T-cell (primary cell): ENCODE measurements at regions of chr17 and their contacts with region 1.

Region 1: DNA sequence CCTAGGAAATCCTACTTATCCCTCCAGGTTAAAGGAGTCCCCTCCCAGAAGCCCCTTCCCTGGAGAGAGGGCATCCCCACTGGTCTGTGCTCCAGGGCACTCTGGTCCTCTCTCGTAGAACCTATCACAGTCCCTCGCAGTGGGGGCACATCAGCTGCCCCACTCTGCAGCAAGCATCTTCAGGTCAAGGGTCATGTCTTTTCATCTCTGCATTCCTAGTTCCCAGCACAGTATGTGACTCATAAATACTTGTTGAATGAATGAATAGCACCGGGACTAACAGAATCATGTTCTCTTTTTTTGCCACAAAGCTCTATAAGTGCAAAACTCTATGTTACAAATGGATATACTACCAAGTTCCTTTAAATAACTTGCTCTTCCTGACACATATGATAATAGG is 36.0 kb downstream of the RNF157 start:
- DNase-seq: no peak
- ATAC-seq: no peak
- H3K4me3 ChIP-seq: no peak overlapping the region
- H3K4me3 Mint-ChIP-seq: no peak overlapping the region
- H3K27ac ChIP-seq: no peak overlapping the region
- H3K27ac Mint-ChIP-seq: peak overlapping the region; percentile 25 to 84
- H3K4me1 ChIP-seq: peaks cover 18 to 53% of the 10 kb centered on the region in 2 experiments
- H3K4me1 Mint-ChIP-seq: peaks cover 67 to 75% (median 72%) of the 10 kb centered on the region in 3 donors
- H3K27me3 ChIP-seq: no peaks in the 10 kb centered on the region
- H3K27me3 Mint-ChIP-seq: no peaks in the 10 kb centered on the region

Region 2: GRCh38 chr17:76049836-76050537 is 154.3 kb before region 1 on chr17:
- CTCF ChIA-PET with region 1: no interaction called
- POLR2A ChIA-PET with region 1: interaction called in 1 of 2 experiments, 12 read pairs
- DNase-seq: no peak
- ATAC-seq: no peak
- H3K4me3 ChIP-seq: no peak overlapping the region
- H3K4me3 Mint-ChIP-seq: no peak overlapping the region
- H3K27ac ChIP-seq: no peak overlapping the region
- H3K27ac Mint-ChIP-seq: peak overlapping the region in 1 of 2 donors; percentile 49
- H3K4me1 ChIP-seq: peaks cover 0 to 2% of the 10 kb centered on the region in 2 experiments
- H3K4me1 Mint-ChIP-seq: peaks cover 11 to 25% (median 23%) of the 10 kb centered on the region in 3 donors
- H3K27me3 ChIP-seq: no peaks in the 10 kb centered on the region
- H3K27me3 Mint-ChIP-seq: no peaks in the 10 kb centered on the region

Region 3: GRCh38 chr17:76182016-76182764 is 22.1 kb before region 1 on chr17:
- CTCF ChIA-PET with region 1: interaction called in 1 of 2 experiments, 11 read pairs
- POLR2A ChIA-PET with region 1: interaction called, 5 to 6 read pairs
- DNase-seq: peak; percentile 84 to 97 (median 91)
- ATAC-seq: peak; percentile 58 to 65 (median 60)
- H3K4me3 ChIP-seq: no peak overlapping the region
- H3K4me3 Mint-ChIP-seq: peak overlapping the region in 1 of 3 donors; percentile 45
- H3K27ac ChIP-seq: peak overlapping the region; percentile 49
- H3K27ac Mint-ChIP-seq: peak overlapping the region; percentile 93 to 94
- H3K4me1 ChIP-seq: peaks cover 39 to 62% of the 10 kb centered on the region in 2 experiments
- H3K4me1 Mint-ChIP-seq: peaks cover 52 to 69% (median 67%) of the 10 kb centered on the region in 3 donors
- H3K27me3 ChIP-seq: no peaks in the 10 kb centered on the region
- H3K27me3 Mint-ChIP-seq: no peaks in the 10 kb centered on the region

Region 4: DNA sequence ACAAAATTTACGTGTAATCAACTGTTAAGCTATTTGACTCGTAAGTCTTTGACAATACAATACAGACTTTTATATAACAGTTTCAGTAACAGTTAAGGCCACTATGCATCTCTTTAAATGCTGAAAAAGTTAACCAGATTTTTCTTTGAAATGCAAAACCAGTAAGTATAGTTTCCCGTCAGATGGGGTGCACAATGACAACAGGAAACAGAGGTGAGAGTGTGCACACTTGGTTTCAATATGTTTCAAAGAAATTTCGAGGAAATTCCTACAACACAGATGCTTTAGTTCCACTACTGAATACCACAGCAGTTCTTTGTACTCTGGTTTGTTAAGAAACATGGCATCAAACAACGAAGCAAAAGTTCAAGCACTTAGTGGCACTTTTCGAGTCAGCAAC is 12.4 kb before region 1 on chr17:
- CTCF ChIA-PET with region 1: interaction called in 1 of 2 experiments, 6 read pairs
- POLR2A ChIA-PET with region 1: interaction called, 4 to 12 read pairs
- DNase-seq: peak in 29 of 35 experiments; percentile 13 to 85 (median 50)
- ATAC-seq: peak; percentile 85 to 89 (median 88)
- H3K4me3 ChIP-seq: peak overlapping the region in 1 of 2 donors; percentile 15
- H3K4me3 Mint-ChIP-seq: peak overlapping the region; percentile 43 to 64 (median 60)
- H3K27ac ChIP-seq: peak overlapping the region; percentile 90
- H3K27ac Mint-ChIP-seq: peak overlapping the region; percentile 77 to 95
- H3K4me1 ChIP-seq: peaks cover 67 to 76% of the 10 kb centered on the region in 2 experiments
- H3K4me1 Mint-ChIP-seq: peaks cover 80 to 91% (median 84%) of the 10 kb centered on the region in 3 donors
- H3K27me3 ChIP-seq: no peaks in the 10 kb centered on the region
- H3K27me3 Mint-ChIP-seq: no peaks in the 10 kb centered on the region

Region 5: GRCh38 chr17:76268015-76268749 is 63.9 kb after region 1 on chr17:
- CTCF ChIA-PET with region 1: interaction called in 1 of 2 experiments, 13 read pairs
- POLR2A ChIA-PET with region 1: interaction called, 4 read pairs
- DNase-seq: peak in 34 of 35 experiments; percentile 57 to 81 (median 67)
- ATAC-seq: peak in 1 of 4 experiments; percentile 5
- H3K4me3 ChIP-seq: peak overlapping the region; percentile 74 to 77
- H3K4me3 Mint-ChIP-seq: peak overlapping the region; percentile 85 to 91 (median 89)
- H3K27ac ChIP-seq: peak overlapping the region; percentile 83
- H3K27ac Mint-ChIP-seq: peak overlapping the region; percentile 95 to 96
- H3K4me1 ChIP-seq: peaks cover 43 to 83% of the 10 kb centered on the region in 2 experiments
- H3K4me1 Mint-ChIP-seq: peaks cover 65 to 69% (median 67%) of the 10 kb centered on the region in 3 donors
- H3K27me3 ChIP-seq: no peaks in the 10 kb centered on the region
- H3K27me3 Mint-ChIP-seq: no peaks in the 10 kb centered on the region

Region 6: DNA sequence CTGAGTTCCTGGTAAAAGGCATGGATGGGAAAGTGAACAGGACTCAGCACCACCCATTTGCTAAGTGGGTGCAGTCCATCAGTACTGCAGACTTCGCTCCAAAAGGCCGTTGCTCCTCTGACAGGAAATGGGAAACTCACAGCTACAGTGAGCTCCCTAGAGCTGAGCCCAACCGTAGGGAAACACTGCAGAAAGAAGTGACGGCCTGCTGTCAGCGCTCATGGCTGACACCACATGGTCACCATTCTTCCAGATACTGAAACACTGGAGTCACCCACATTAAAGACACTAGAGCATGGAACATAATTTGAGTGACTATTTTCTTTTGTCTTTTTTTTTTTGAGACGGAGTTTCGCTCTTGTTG is 216.7 kb after region 1 on chr17:
- CTCF ChIA-PET with region 1: no interaction called
- POLR2A ChIA-PET with region 1: no interaction called
- DNase-seq: no peak
- ATAC-seq: no peak
- H3K4me3 ChIP-seq: no peak overlapping the region
- H3K4me3 Mint-ChIP-seq: no peak overlapping the region
- H3K27ac ChIP-seq: no peak overlapping the region
- H3K27ac Mint-ChIP-seq: no peak overlapping the region
- H3K4me1 ChIP-seq: peaks cover 0 to 3% of the 10 kb centered on the region in 2 experiments
- H3K4me1 Mint-ChIP-seq: peaks cover 19 to 40% (median 29%) of the 10 kb centered on the region in 3 donors
- H3K27me3 ChIP-seq: no peaks in the 10 kb centered on the region
- H3K27me3 Mint-ChIP-seq: no peaks in the 10 kb centered on the region